Right ventricle myocardium superior (tissue), 1 donor: ENCODE measurements at regions of chr5 and their contacts with region 1.

Region 1: DNA sequence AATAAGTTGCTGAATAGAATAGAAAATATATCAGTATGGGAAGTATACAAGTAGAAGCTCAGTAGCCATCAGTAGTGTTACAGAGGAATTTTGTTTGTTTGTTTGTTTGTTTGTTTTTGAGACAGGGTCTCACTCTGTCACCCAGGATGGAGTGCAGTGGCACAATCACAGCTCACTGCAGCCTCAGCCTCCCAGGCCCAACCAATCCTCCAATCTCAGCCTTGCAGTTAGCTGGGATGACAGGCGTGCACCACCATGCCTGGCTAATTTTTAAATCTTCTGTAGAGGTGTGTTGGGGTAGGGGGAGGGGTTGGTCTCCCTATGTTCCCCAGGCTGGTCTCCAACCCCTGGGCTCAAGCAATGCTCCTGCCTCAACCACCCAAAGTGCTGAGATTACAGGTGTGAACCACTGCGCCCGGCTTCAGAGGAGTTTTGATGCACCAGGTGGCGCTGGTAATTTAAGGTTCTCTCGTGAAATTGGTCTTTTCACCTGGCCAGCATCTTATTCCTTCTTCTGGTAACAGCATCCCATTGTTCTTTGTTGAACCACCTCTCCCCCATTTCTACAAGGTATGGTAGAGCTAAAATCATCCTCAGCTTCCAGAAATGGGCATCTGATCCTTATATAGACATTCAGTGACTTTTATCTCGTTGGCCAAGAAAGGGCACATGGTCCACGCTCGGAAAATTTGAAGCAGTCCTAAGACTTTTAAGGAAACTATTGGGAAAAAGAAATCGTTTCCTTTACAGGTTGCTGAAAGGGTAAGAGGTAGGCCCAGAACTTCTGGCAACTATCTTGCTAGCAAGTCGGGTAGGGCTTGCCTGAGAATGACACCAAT is 157.1 kb downstream of the ARRDC3 start:
- DNase-seq: no peak
- ATAC-seq: peak; percentile 67

Region 2: GRCh38 chr5:90921418-90921973 is 304.6 kb before region 1 on chr5:
- intact Hi-C with region 1: no loop called
- DNase-seq: no peak
- ATAC-seq: no peak

Region 3: DNA sequence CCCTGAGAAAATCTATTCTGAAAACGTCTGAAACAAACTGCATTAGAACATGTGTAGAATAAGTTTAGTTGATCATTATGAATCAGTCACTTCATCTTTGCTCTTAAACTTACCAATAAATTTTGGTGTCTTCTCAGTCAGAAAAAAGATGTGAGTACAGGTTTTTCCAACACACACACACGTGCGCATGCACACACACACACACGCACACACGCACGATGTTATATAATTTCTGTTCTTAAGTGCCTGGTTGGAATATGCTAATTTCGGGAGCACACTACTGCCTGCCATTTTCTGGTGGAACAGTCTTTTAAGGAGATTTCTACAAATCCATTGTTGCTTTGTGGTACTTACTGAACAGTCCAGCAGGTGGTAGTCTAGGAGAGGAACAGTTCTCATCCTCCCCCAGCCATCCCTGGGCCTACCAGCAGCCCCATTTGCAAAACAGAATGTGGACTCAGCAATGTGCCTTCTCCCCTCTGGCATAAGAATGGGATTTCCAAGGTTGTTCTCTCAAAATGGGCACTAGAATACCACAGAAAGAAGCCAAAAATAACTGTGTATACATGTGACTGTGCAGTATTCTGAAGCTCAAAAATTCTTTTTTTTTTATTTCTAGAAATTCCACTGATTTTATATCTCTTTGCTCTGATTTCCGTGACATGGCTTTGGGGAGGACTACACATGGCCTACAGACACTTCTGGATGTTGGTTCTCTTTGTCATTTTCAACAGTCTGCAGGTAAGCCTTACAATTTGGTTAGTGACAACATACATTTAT is 124.3 kb before region 1 on chr5:
- intact Hi-C with region 1: loop called (anchors 5 kb)
- DNase-seq: peak; percentile 72
- ATAC-seq: peak; percentile 94

Region 4: DNA sequence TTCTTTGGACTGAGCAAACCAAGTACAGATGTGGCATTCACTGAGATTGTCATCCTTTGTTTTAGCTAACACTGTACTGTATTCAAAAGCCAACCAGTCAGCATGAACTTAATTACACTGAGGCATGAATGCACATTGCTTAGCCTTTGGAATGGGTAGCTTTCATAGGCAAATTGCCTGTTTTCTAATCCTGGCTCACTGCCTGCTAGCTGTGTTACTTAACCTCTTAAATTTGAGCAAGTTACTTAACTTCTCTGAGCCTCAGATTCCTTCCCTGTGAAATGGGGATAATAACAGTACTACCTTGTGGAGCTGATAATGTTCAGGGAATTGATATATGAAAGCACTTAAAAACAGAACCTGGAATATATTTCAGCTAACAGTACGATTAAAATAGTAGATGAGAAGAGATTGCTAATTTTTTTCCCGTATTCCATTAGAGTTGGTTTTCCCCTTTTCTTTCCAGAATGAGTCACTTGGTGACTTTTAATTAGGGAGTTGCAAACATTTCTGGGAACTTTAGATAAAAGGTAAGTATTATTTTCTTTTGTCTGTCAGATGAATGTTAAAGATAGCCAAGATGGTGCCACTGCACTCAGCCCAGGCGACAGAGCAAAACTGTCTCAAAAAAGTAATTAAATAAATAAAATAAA is 113.1 kb after region 1 on chr5:
- intact Hi-C with region 1: no loop called
- DNase-seq: no peak
- ATAC-seq: no peak